Body of pancreas (tissue), 4 donors: ENCODE measurements at regions of chr1 and their contacts with region 1.

Region 1: DNA sequence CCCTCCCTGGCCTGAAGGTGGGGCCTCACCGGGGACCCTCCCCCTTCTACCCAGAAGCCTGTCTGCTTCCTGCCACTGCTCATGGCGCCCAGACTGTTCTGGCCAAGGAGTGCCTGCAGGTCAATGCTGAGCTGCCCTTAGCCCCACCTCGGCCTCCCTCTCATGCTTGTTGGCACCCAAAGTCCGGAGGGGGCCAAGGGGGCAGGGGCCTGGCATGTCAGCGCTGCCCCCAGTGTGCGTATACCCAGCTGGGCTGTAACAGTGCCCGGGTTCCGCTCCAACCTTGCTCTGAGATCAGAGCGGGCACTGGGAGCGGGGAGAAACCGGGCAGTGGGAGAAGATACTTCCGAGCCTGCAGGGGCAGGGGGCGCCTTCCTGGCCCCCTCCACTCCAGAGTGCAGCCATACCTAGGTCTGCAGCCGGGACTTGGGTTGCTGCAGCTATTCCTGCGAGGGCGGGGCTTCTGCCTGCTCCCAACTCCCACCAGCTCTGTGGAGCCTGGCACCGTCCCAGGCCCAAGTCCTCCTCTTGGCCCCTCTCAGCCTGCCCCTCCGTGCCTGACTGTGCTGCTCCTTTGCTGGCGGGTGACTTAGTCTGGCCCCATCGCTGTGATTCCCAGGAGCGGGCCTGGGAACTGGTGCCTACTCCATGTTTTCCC is 21.4 kb upstream of the TGFB2 start:
- DNase-seq: no peak
- ATAC-seq: no peak
- H3K4me3 ChIP-seq: no peak overlapping the region
- H3K27ac ChIP-seq: no peak overlapping the region
- H3K4me1 ChIP-seq: no peaks in the 10 kb centered on the region
- H3K27me3 ChIP-seq: no peaks in the 10 kb centered on the region
- CTCF ChIP-seq: no peak
- POLR2A ChIP-seq: no peak

Region 2: DNA sequence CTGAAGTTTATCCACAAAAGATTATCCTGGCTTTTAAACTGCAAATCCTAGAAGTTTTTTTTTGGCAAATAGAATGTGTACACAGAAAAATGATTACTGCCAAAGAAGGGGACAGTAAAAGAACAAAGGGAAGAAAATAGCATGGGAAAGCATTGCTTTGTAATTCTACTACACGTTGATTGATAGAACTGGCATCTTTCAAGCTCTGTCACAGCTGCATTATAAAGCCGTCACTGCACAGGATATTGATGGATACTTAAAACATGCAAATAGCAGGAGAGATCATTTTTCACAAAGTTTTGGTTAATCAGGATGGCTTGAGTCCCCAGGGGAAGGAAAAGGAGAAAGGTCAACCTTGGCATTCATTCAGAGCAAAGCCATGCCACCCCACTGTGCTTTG is 222.3 kb before region 1 on chr1:
- intact Hi-C with region 1: no loop called
- DNase-seq: no peak
- ATAC-seq: no peak
- H3K4me3 ChIP-seq: no peak overlapping the region
- H3K27ac ChIP-seq: no peak overlapping the region
- H3K4me1 ChIP-seq: no peaks in the 10 kb centered on the region
- H3K27me3 ChIP-seq: no peaks in the 10 kb centered on the region
- CTCF ChIP-seq: no peak
- POLR2A ChIP-seq: no peak

Region 3: DNA sequence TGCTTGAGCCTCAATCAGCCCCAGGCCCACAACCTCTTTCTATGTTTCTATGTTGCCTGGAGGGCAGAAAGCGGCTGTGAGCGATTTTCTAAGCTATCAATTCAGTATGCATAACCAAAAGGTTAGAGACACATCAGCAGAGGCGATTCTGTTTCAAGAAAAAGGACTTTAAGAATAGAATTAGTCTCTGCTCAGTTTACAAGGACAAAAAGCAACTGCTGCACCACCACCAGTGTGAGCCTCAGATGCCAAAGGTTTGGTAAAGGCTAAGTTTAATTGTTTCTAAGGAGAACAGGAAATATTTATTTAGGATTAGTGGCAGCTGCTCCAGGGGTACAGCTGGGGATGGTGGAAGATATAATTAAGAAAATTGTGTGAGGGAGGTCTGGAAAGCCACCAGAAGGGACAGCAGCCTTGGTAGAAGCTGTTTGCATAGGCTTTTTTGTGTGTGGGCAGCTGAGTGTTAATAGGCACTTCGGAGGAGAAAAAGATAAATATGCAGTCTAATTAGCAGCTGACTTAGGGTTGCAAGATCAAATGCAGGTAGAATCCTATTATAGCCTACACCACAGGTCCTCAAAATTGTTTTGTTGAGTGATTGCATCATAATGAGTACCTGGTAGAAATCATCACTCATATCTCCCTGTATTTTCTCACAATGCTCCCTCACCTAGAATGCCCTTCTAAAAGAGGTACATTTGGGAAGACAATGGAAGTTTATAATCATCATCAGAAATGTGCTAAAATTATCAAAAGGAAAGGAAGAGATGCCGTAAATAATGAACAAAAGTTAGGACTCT is 1253.4 kb after region 1 on chr1:
- intact Hi-C with region 1: loop called (anchors 10 kb)
- DNase-seq: no peak
- ATAC-seq: no peak
- H3K4me3 ChIP-seq: no peak overlapping the region
- H3K27ac ChIP-seq: no peak overlapping the region
- H3K4me1 ChIP-seq: no peaks in the 10 kb centered on the region
- H3K27me3 ChIP-seq: no peaks in the 10 kb centered on the region
- CTCF ChIP-seq: no peak
- POLR2A ChIP-seq: no peak